ENCODE measurements at regions of chr10 and their contacts with region 1.

Region 1: GRCh38 chr10:60646966-60647796 is 131.1 kb upstream of the CDK1 start:
- DNase-seq: peak in 18 of 35 experiments; percentile 2 to 77 (median 21)
- ATAC-seq: no peak
- H3K4me3 ChIP-seq: no peak overlapping the region
- H3K4me3 Mint-ChIP-seq: no peak overlapping the region
- H3K27ac ChIP-seq: no peak overlapping the region
- H3K27ac Mint-ChIP-seq: no peak overlapping the region
- H3K4me1 ChIP-seq: peaks cover 3 to 14% of the 10 kb centered on the region in 2 experiments
- H3K4me1 Mint-ChIP-seq: peaks cover 35 to 40% (median 37%) of the 10 kb centered on the region in 3 donors
- H3K27me3 ChIP-seq: no peaks in the 10 kb centered on the region
- H3K27me3 Mint-ChIP-seq: no peaks in the 10 kb centered on the region

Region 2: GRCh38 chr10:60099998-60100747 is 547.0 kb before region 1 on chr10:
- CTCF ChIA-PET with region 1: interaction called, 6 to 17 read pairs
- POLR2A ChIA-PET with region 1: no interaction called
- DNase-seq: peak in 3 of 35 experiments; percentile 6 to 63 (median 6)
- ATAC-seq: peak in 1 of 4 experiments; percentile 46
- H3K4me3 ChIP-seq: no peak overlapping the region
- H3K4me3 Mint-ChIP-seq: no peak overlapping the region
- H3K27ac ChIP-seq: no peak overlapping the region
- H3K27ac Mint-ChIP-seq: no peak overlapping the region
- H3K4me1 ChIP-seq: no peaks in the 10 kb centered on the region
- H3K4me1 Mint-ChIP-seq: no peaks in the 10 kb centered on the region
- H3K27me3 ChIP-seq: no peaks in the 10 kb centered on the region
- H3K27me3 Mint-ChIP-seq: no peaks in the 10 kb centered on the region

Region 3: DNA sequence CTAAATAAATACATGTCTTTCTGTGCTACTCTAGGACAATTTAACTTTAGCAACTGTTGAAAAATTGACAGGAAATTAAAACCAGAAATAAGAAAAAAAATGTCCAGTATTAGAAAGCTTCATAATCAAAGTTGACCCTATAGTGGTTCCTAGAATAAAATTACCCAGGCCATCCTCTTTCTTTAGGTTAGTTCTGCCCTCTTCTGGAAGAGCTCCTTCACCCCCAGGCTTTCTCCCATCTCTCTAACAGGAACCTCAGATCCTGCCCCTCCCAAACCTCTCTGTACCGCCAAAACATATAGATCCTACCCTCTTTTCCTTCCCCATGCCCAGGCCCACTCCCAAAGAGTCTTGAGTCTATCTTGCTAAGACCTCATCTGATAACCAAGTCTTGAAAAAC is 28.3 kb before region 1 on chr10:
- CTCF ChIA-PET with region 1: no interaction called
- POLR2A ChIA-PET with region 1: interaction called in 1 of 2 experiments, 11 read pairs
- DNase-seq: no peak
- ATAC-seq: no peak
- H3K4me3 ChIP-seq: no peak overlapping the region
- H3K4me3 Mint-ChIP-seq: no peak overlapping the region
- H3K27ac ChIP-seq: no peak overlapping the region
- H3K27ac Mint-ChIP-seq: no peak overlapping the region
- H3K4me1 ChIP-seq: no peaks in the 10 kb centered on the region
- H3K4me1 Mint-ChIP-seq: peaks cover 21 to 30% (median 26%) of the 10 kb centered on the region in 3 donors
- H3K27me3 ChIP-seq: no peaks in the 10 kb centered on the region
- H3K27me3 Mint-ChIP-seq: no peaks in the 10 kb centered on the region